ENCODE measurements at regions of chr20 and their contacts with region 1.

Region 1: GRCh38 chr20:25623736-25624499 is at the start of gene NANP:
- DNase-seq: peak; percentile 62 to 92 (median 73)
- ATAC-seq: peak; percentile 86
- H3K4me3 ChIP-seq: peak within 1 kb of the TSS; percentile 96
- H3K4me3 Mint-ChIP-seq: peak within 1 kb of the TSS; percentile 86 to 96 (median 94)
- H3K27ac ChIP-seq: peak within 1 kb of the TSS; percentile 70
- H3K27ac Mint-ChIP-seq: peak within 1 kb of the TSS; percentile 78 to 96 (median 90)
- H3K4me1 ChIP-seq: peaks cover 0 to 12% of the 10 kb centered on the region in 2 donors
- H3K4me1 Mint-ChIP-seq: peaks cover 14 to 34% (median 18%) of the 10 kb centered on the region in 7 donors
- H3K27me3 ChIP-seq: no peaks in the 10 kb centered on the region
- H3K27me3 Mint-ChIP-seq: peaks cover 0 to 3% (median 0%) of the 10 kb centered on the region in 5 donors
- total RNA-seq, gene NANP: 1.0 to 7.0 (median 1.9) TPM

Region 2: GRCh38 chr20:24823989-24824693 is 799.8 kb before region 1 on chr20:
- CTCF ChIA-PET with region 1: no interaction called
- POLR2A ChIA-PET with region 1: no interaction called
- intact Hi-C with region 1: no loop called
- DNase-seq: no peak
- ATAC-seq: no peak
- H3K4me3 ChIP-seq: no peak overlapping the region
- H3K4me3 Mint-ChIP-seq: no peak overlapping the region
- H3K27ac ChIP-seq: no peak overlapping the region
- H3K27ac Mint-ChIP-seq: no peak overlapping the region
- H3K4me1 ChIP-seq: no peaks in the 10 kb centered on the region
- H3K4me1 Mint-ChIP-seq: no peaks in the 10 kb centered on the region
- H3K27me3 ChIP-seq: no peaks in the 10 kb centered on the region
- H3K27me3 Mint-ChIP-seq: no peaks in the 10 kb centered on the region

Region 3: DNA sequence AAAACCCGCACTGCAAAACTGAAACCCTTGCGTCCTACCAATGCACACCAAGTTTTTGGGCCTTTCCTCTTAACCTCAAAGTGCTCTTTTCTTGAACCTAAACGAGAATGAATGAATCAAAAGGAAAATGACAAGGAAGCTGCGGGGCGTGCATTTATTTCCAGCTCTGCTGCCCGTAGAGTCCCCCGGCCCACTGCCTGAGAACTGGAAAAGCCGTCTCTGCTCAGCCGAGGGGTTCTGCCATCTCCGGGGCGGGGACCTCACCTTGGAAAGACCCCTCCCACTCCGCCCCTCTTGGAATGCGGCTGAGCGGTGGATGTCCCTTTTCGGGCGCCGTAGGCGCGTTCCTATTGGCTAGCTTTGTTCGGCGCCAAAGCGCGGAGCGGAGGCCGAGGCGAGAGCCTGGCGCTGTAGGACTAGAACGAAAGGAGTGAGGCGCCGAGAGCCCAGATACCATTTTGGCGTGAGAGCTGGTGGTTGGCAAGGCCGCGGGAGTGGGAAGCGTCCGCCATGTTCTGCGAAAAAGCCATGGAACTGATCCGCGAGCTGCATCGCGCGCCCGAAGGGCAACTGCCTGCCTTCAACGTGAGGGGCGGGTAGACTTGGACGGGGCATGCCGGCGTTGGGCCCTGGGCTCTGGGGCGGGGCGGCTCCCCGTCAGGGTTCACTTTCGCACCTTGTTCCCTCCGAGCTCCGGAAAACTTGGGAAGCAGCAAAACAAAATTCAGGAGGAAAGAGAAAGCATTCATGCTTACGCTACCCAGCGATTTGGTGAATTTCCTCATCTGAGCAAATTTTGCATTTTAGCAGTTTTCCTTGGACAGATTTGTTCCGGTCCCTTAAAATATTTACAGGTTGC is 216.4 kb before region 1 on chr20 and contains the start of gene GINS1:
- CTCF ChIA-PET with region 1: no interaction called
- POLR2A ChIA-PET with region 1: interaction called, 3 read pairs
- intact Hi-C with region 1: loop called (anchors 1 to 5 kb)
- DNase-seq: peak; percentile 56 to 92 (median 69)
- ATAC-seq: peak; percentile 94
- H3K4me3 ChIP-seq: peak within 1 kb of the TSS; percentile 75
- H3K4me3 Mint-ChIP-seq: peak within 1 kb of the TSS; percentile 77 to 95 (median 92)
- H3K27ac ChIP-seq: peak within 1 kb of the TSS; percentile 57
- H3K27ac Mint-ChIP-seq: peak within 1 kb of the TSS; percentile 28 to 93 (median 80)
- H3K4me1 ChIP-seq: peaks cover 6 to 11% of the 10 kb centered on the region in 2 donors
- H3K4me1 Mint-ChIP-seq: peaks cover 4 to 25% (median 13%) of the 10 kb centered on the region in 7 donors
- H3K27me3 ChIP-seq: no peaks in the 10 kb centered on the region
- H3K27me3 Mint-ChIP-seq: no peaks in the 10 kb centered on the region
- total RNA-seq, gene GINS1: 0.44 to 24.9 (median 0.81) TPM

Region 4: GRCh38 chr20:25584905-25585704 is 38.8 kb before region 1 on chr20 and contains the start of gene NINL:
- CTCF ChIA-PET with region 1: no interaction called
- POLR2A ChIA-PET with region 1: no interaction called
- intact Hi-C with region 1: loop called (anchors 1 kb)
- DNase-seq: peak; percentile 6 to 64 (median 47)
- ATAC-seq: peak; percentile 84
- H3K4me3 ChIP-seq: peak within 1 kb of the TSS; percentile 50
- H3K4me3 Mint-ChIP-seq: peak within 1 kb of the TSS; percentile 68 to 91 (median 80)
- H3K27ac ChIP-seq: peak within 1 kb of the TSS; percentile 33
- H3K27ac Mint-ChIP-seq: peak within 1 kb of the TSS in 8 of 9 donors; percentile 9 to 86 (median 62)
- H3K4me1 ChIP-seq: no peaks in the 10 kb centered on the region
- H3K4me1 Mint-ChIP-seq: peaks cover 0 to 19% (median 8%) of the 10 kb centered on the region in 7 donors
- H3K27me3 ChIP-seq: no peaks in the 10 kb centered on the region
- H3K27me3 Mint-ChIP-seq: peaks cover 0 to 21% (median 15%) of the 10 kb centered on the region in 5 donors
- total RNA-seq, gene NINL: 1.4 to 4.2 (median 3.0) TPM

Region 5: GRCh38 chr20:25750765-25751696 is 127.1 kb after region 1 on chr20:
- CTCF ChIA-PET with region 1: no interaction called
- POLR2A ChIA-PET with region 1: no interaction called
- intact Hi-C with region 1: loop called (anchors 1 to 5 kb)
- DNase-seq: peak; percentile 28 to 63 (median 43)
- ATAC-seq: peak; percentile 96
- H3K4me3 ChIP-seq: peak overlapping the region; percentile 68
- H3K4me3 Mint-ChIP-seq: peak overlapping the region; percentile 83 to 93 (median 86)
- H3K27ac ChIP-seq: peak overlapping the region; percentile 59
- H3K27ac Mint-ChIP-seq: peak overlapping the region; percentile 19 to 95 (median 79)
- H3K4me1 ChIP-seq: peaks cover 0 to 4% of the 10 kb centered on the region in 2 donors
- H3K4me1 Mint-ChIP-seq: peaks cover 7 to 20% (median 14%) of the 10 kb centered on the region in 7 donors
- H3K27me3 ChIP-seq: no peaks in the 10 kb centered on the region
- H3K27me3 Mint-ChIP-seq: no peaks in the 10 kb centered on the region

Region 6: GRCh38 chr20:25859649-25860530 is 236.0 kb after region 1 on chr20:
- CTCF ChIA-PET with region 1: no interaction called
- POLR2A ChIA-PET with region 1: no interaction called
- intact Hi-C with region 1: loop called in 1 of 2 experiments (anchors 1 kb)
- DNase-seq: peak; percentile 67 to 85 (median 77)
- ATAC-seq: peak; percentile 69
- H3K4me3 ChIP-seq: no peak overlapping the region
- H3K4me3 Mint-ChIP-seq: peak overlapping the region; percentile 72 to 97 (median 82)
- H3K27ac ChIP-seq: no peak overlapping the region
- H3K27ac Mint-ChIP-seq: peak overlapping the region in 1 of 9 donors; percentile 6
- H3K4me1 ChIP-seq: peaks cover 11 to 25% of the 10 kb centered on the region in 2 donors
- H3K4me1 Mint-ChIP-seq: peaks cover 37 to 70% (median 45%) of the 10 kb centered on the region in 7 donors
- H3K27me3 ChIP-seq: peaks cover 0 to 15% of the 10 kb centered on the region in 2 donors
- H3K27me3 Mint-ChIP-seq: peaks cover 49 to 90% (median 72%) of the 10 kb centered on the region in 5 donors

Measured in naive thymus-derived CD4-positive, alpha-beta T cell (primary cell).